ENCODE measurements at regions of chr4 and their contacts with region 1.

Region 1: DNA sequence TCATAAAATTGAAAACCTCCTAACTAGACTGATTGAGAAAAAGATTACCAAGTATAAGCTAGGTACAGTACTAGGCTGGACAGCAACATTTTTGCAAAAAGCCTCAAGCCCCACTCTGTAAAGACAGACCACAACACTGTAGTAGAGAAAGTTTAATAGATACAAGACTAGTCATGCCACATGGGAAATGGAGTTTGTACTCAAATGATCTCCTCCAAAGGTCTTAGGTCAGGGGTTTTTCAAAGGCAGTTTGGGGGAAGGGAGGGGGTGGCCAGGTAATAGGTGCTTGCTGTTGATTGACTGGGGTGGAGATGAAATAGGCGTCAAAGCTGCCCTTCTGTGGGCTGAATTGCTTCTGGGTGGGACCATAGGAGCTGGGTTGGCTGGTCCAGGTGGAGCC is 14.2 kb downstream of the CNGA1 start:
- DNase-seq: no peak
- H3K4me3 ChIP-seq: no peak overlapping the region
- H3K27ac ChIP-seq: no peak overlapping the region
- H3K4me1 ChIP-seq: no peaks in the 10 kb centered on the region
- H3K27me3 ChIP-seq: no peaks in the 10 kb centered on the region
- CTCF ChIP-seq: no peak

Region 2: DNA sequence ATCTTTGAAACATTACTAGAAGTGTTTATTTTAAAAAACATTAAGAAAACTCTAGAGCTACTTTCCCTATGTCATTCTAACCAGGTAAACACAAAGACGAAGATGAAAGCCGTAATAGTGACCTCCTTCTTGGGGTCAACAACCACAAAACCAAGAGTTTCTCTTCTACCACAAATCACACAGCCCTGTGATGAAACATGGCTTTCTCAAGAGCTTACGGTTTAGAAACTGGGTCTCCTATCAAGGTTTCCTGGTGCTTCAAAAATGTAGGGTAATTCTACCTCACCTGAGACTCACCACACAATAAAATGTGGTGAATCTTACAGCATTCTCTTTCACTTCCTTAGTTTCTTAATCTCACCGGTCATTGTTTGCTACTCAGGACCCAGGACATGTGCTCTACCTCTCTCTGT is 215.3 kb before region 1 on chr4:
- CTCF ChIA-PET with region 1: no interaction called
- POLR2A ChIA-PET with region 1: no interaction called
- intact Hi-C with region 1: no loop called
- DNase-seq: no peak
- H3K4me3 ChIP-seq: no peak overlapping the region
- H3K27ac ChIP-seq: no peak overlapping the region
- H3K4me1 ChIP-seq: no peaks in the 10 kb centered on the region
- H3K27me3 ChIP-seq: no peaks in the 10 kb centered on the region
- CTCF ChIP-seq: no peak

Region 3: DNA sequence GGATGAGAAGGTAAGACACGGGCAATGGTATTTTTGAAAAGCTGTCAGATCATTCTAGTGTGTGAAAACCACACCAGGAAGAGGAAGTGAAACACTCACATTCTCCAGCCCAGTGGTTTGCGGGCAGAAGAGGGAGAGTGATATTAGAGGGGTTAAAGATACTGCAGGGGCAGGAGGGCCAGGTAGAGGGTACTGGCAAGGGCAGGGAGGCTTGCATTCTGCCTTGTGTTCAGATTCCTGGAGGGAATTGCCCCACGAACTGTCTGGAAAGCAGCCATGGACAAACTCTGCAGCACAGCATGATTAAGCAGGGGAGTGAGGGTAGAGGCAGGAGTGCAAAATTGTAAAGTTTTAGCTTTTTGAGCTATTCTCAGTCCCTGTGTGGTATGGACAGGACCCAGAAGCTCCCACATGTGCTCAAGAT is 45.2 kb after region 1 on chr4:
- CTCF ChIA-PET with region 1: no interaction called
- POLR2A ChIA-PET with region 1: no interaction called
- intact Hi-C with region 1: no loop called
- DNase-seq: no peak
- H3K4me3 ChIP-seq: no peak overlapping the region
- H3K27ac ChIP-seq: no peak overlapping the region
- H3K4me1 ChIP-seq: peaks cover 17% of the 10 kb centered on the region
- H3K27me3 ChIP-seq: no peaks in the 10 kb centered on the region
- CTCF ChIP-seq: no peak

Region 4: DNA sequence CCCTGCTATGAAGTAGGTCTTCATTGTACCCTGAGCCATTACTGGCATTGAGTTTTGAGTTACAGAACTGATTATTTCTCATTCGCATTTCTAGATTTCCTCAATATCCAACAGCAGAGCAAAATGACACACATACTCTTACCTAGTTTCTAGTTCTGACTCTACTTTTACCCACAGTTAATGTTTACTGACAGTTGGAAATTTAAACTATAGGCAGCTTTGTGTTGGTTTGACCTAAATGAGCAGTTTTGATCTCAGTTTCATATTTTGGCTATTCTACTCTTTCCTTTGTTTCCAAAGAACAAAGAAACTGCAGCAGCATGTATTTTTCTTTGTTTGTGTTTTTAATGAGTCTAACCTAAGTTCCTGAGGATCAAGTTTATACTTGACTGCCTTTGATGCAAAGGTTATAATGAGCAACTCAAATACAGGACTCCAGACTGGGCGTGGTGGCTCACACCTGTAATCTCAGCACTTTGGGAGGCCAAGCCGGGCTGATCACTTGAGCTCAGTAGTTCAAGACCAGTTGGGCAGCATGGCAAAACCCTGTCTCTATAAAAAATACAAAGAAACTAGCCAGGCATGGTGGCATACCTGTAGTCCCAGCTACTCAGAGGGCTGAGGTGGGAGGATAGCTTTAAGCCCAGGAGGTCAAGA is 101.3 kb after region 1 on chr4:
- CTCF ChIA-PET with region 1: no interaction called
- POLR2A ChIA-PET with region 1: no interaction called
- intact Hi-C with region 1: no loop called
- DNase-seq: no peak
- H3K4me3 ChIP-seq: no peak overlapping the region
- H3K27ac ChIP-seq: no peak overlapping the region
- H3K4me1 ChIP-seq: no peaks in the 10 kb centered on the region
- H3K27me3 ChIP-seq: no peaks in the 10 kb centered on the region
- CTCF ChIP-seq: no peak

Region 5: DNA sequence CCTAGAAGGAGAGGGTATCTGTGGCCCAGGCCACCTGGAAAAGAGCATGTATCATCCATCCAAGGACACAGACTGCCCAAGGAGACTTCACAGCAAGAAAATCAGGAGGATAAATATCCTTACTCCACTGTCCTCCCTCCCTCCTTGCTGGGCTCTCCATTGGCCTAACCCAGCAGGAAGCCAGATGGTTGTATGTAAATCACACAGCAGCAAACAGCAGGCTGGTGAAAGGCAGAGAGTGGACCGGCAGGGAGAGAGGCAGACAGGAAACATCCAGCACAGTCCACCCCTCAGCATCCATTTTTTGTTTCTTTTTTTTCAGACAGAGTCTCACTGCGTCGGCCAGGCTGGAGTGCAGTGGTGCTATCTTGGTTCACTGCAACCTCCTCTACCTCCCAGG is 114.3 kb after region 1 on chr4:
- CTCF ChIA-PET with region 1: no interaction called
- POLR2A ChIA-PET with region 1: no interaction called
- intact Hi-C with region 1: no loop called
- DNase-seq: no peak
- H3K4me3 ChIP-seq: no peak overlapping the region
- H3K27ac ChIP-seq: no peak overlapping the region
- H3K4me1 ChIP-seq: peaks cover 9% of the 10 kb centered on the region
- H3K27me3 ChIP-seq: no peaks in the 10 kb centered on the region
- CTCF ChIP-seq: no peak

Region 6: DNA sequence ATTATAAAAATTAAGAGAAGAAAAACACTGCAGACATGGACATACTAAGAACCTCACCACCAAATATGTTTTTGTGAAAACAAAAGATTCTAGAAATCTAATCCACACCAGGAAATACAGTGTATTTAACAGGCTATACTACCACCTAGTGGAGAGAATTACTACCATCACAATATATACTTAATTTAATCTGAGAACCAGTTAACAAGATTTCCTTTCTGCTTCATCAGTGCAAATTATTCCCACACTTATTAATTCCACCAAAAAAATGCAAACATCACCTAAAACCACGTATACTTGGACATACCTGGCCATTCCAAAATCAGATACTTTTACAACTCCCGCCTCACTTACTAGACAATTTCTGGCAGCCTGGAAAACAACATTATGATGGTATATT is 138.8 kb after region 1 on chr4:
- CTCF ChIA-PET with region 1: no interaction called
- POLR2A ChIA-PET with region 1: no interaction called
- intact Hi-C with region 1: loop called (anchors 5 kb)
- DNase-seq: peak in 1 of 2 experiments; percentile 48
- H3K4me3 ChIP-seq: no peak overlapping the region
- H3K27ac ChIP-seq: no peak overlapping the region
- H3K4me1 ChIP-seq: peaks cover 6% of the 10 kb centered on the region; the same call in 1 of the 2 replicates
- H3K27me3 ChIP-seq: no peaks in the 10 kb centered on the region
- CTCF ChIP-seq: peak; percentile 76

Measured in PC-9 (cell line).